Head of caudate nucleus (tissue), 42 donors: ENCODE measurements at regions of chr7 and their contacts with region 1.

Region 1: GRCh38 chr7:106598663-106599342 is 62.2 kb downstream of the CCDC71L start:
- DNase-seq: peak in 40 of 42 donors; percentile 8 to 75 (median 36)

Region 2: DNA sequence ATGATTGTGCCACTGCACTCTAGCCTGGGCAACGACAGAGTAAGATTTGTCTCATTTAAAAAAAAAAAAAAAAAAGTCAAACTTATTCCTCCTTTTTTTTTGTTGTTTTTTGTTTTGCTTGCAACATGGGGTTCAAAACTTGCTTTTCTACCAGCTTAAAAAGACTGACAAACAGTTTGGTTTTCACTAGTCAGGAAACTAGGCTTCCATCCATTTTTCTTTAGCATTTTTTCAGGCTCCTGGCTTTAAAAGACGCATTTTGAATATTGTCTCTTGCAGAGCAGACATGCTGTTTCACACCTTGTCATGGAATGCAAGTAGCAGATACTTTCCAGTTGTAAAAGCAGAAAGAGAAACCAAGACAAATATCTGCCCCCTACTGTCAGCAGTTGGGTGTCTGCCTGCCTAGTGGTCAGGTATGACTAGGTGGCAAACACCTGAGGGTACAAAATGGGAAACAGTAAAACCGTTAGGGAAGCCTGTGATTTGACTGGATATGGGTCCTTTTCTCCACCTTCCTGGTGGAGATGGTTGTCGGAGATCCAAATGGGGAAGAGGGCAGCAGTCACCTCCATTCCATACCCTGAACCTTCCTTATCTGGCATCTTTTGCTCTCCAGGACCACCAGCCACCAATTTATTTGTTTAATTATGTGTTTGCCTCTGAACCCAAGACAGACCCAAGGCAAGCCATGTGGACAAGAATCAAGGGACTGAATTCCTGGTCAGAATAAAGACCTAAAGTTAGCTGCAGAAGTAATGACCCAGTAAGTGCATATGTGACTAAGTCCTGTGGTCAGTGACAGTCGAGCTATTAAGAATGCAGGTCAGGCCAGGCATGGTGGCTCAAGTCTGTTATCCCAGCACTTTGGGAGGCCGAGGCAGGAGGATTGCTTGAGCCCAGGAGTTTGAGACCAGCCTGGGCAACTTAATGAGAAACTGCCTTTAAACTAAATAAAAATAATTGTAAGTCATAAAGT is 77.6 kb before region 1 on chr7:
- intact Hi-C with region 1: no loop called
- DNase-seq: no peak

Region 3: DNA sequence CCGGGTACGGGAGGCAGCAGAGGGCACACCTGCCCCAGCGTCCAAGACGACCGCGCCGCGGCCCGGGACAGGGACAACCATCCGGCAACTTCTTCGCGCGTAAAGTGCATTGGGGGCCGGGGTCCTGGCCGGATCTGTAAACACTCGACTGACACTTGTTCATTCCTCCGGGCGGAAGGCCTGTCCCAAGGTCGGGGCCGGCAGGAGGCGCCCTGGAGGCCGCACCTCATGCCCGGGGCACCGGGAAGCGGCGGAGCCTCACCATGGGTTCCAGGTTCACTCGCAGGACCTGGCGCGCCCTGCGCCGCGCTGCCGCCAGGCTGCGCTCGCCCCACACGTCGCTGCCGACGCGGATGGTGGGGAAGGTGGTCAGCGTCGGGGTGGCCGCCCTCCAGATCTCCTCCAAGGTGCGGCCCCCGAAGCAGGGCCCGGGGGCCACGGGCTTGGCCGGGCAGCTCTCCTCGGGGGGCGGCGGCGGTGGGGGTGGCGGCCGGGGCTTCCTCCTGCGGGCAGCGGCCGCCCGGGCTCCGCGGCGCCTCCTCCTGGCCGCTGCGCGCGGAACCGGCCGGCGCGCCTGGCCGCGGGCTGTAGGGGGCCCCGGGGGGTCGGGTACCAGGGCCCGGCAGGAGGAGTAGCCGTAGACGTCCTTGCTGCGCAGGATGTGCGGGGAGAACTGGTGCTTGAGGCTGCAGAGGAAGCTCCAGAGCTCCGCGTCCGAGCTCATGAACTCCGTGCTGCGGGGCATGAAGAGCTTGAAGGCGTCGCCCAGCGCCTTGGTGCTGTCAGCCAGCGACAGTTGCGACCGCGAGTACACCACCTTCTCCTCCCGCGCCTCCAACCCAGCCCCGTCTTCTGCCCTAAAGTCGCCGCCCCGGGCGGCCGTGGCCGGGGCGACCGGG is 61.4 kb after region 1 on chr7:
- intact Hi-C with region 1: loop called (anchors 10 kb)
- DNase-seq: peak; percentile 7 to 77 (median 52)